ENCODE measurements at regions of chr22 and their contacts with region 1.

Region 1: DNA sequence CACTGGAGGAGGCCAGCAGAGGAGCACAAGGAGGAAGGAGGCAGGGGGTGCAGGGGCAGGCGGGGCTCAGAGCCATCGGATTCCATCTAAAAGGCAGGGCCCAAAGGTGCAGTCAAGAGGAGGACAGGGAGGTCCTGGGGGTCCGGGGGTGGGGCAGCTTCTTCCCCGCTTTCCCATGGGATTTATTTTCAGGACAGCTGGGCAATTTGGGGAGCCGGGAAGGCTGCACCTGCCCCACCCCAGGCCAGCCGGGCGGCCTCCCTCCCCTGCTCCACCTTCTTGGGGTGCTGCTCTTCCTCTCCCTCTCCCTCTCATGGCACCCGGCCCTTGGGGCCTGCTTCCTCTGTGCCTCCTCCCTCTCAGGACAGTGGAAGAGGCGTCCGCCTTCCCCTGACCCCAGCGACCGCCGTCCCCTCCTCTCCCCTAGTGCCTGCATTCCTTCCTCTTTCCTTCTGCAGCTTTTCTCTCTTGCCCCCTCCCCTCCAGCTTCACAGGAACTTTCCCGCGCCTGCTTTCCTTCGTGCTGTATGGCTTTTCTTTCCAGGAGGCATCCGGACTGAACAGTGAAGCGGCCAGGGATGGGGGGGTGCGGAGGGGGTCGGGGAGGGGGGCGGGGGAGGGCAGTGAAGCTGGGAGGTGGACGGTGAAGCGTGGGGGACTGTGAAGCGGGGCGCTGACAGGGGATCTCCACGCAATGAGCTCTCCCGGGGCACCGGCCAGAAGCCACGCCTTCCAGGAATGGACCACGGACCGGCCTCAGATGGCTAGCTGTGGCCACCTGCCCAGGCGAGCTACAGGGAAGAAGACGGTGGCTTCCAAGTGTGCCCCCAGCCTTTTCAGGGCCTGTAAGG is 26.9 kb downstream of the APOBEC3H start:
- DNase-seq: no peak
- H3K4me3 ChIP-seq: no peak overlapping the region
- H3K27ac ChIP-seq: no peak overlapping the region
- H3K4me1 ChIP-seq: peaks cover 0 to 4% (median 2%) of the 10 kb centered on the region in 4 donors
- H3K27me3 ChIP-seq: no peaks in the 10 kb centered on the region
- CTCF ChIP-seq: no peak

Region 2: GRCh38 chr22:38777087-38777671 is 346.8 kb before region 1 on chr22:
- intact Hi-C with region 1: loop called (anchors 10 kb)
- DNase-seq: no peak
- H3K4me3 ChIP-seq: no peak overlapping the region
- H3K27ac ChIP-seq: no peak overlapping the region
- H3K4me1 ChIP-seq: no peaks in the 10 kb centered on the region
- H3K27me3 ChIP-seq: no peaks in the 10 kb centered on the region
- CTCF ChIP-seq: no peak

Region 3: DNA sequence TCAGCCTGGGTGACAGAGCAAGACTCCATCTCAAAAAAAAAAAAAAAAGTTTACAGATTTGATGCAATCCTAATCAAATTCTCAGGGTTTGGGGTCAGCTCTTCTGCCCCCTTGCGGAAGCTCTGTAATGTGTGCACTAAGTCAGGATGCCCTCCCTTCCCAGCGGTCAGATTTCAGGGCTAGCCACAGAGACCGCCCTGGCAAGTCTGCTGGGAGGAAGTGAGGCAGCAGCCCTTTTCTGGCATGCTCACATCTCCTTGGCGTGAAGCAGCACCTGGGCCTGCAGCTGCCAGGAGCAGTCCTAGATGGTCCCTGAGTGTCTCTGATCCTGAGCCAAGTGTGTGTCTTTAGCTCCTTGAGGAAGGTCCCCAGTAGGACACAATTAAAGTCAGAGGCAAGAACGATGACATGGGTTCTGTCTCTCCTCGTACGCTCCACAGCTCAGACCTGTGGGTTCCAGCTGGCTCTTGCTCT is 120.8 kb before region 1 on chr22:
- intact Hi-C with region 1: loop called (anchors 5 kb)
- DNase-seq: peak; percentile 73 to 86
- H3K4me3 ChIP-seq: no peak overlapping the region
- H3K27ac ChIP-seq: no peak overlapping the region
- H3K4me1 ChIP-seq: peaks cover 0 to 4% (median 0%) of the 10 kb centered on the region in 4 donors
- H3K27me3 ChIP-seq: peaks cover 0 to 3% of the 10 kb centered on the region in 2 donors
- CTCF ChIP-seq: peak; percentile 76 to 78

Region 4: GRCh38 chr22:39068033-39068791 is 55.8 kb before region 1 on chr22:
- intact Hi-C with region 1: no loop called
- DNase-seq: no peak
- H3K4me3 ChIP-seq: no peak overlapping the region
- H3K27ac ChIP-seq: no peak overlapping the region
- H3K4me1 ChIP-seq: no peaks in the 10 kb centered on the region
- H3K27me3 ChIP-seq: no peaks in the 10 kb centered on the region
- CTCF ChIP-seq: no peak

Region 5: DNA sequence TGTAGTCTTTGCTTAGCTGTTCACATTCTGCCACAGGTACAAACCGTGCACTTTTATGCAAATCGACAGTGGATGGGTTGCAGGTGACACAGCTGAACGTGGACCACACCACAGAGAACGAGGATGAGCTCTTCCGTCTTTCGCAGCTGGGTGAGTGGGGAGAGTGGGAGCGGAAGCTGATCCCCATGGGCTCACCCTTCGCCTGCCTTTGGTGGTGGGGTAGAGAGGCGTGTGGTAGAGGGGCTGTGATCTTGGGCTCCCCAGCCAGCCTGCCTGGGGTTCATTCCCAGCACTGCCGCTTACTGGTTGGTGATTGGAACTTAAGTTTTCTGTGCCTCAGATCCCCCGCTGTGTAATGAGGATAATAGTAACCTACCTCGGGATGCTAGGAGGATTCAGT is 294.7 kb after region 1 on chr22:
- intact Hi-C with region 1: no loop called
- DNase-seq: no peak
- H3K4me3 ChIP-seq: no peak overlapping the region
- H3K27ac ChIP-seq: no peak overlapping the region
- H3K4me1 ChIP-seq: peaks cover 0 to 7% (median 0%) of the 10 kb centered on the region in 4 donors
- H3K27me3 ChIP-seq: no peaks in the 10 kb centered on the region
- CTCF ChIP-seq: no peak